ENCODE measurements at regions of chr1 and their contacts with region 1.

Region 1: DNA sequence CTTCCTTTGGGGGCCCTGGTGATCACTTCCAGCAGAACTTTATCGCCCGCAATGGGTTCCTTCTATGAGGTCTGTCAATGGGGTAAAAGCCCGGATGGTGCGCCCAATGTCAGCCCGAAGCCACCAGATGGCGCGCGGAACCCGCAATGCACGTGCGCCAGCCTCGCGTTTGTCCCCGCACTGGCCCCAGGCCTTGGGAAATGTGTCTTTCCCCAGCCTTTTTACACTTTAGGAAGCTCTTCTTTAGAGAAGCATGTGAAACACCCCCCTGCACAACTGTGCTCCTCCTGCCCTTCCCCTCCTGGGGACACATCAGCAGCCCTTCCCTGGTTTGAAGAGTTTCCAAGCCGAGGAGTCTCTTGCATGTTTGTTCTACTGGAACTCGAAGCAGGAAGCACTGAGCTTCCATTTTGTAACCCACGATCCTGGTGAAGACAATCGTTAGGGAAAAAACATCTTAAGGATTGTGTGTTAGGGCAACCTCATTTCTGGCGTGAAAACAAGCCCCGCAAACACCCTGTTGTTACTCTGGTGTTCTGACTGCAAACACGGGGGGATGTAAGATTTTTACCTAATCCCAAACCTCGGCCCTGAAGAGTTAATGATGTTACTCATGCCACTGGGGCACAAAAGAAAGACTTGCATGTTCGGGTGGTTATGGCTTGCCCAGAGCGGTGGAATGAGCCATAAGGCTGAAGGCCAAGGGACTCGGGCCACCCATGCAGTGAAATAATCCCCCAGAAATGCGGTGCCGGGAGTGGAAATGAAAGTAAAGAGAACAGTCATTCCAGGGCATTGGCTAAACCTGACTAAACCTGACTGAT is 20.4 kb upstream of the TARBP1 start:
- DNase-seq: peak; percentile 81
- H3K4me3 Mint-ChIP-seq: peak overlapping the region; percentile 11
- H3K27ac Mint-ChIP-seq: peak overlapping the region; percentile 93
- H3K4me1 Mint-ChIP-seq: peaks cover 80% of the 10 kb centered on the region
- H3K27me3 Mint-ChIP-seq: no peaks in the 10 kb centered on the region

Region 2: DNA sequence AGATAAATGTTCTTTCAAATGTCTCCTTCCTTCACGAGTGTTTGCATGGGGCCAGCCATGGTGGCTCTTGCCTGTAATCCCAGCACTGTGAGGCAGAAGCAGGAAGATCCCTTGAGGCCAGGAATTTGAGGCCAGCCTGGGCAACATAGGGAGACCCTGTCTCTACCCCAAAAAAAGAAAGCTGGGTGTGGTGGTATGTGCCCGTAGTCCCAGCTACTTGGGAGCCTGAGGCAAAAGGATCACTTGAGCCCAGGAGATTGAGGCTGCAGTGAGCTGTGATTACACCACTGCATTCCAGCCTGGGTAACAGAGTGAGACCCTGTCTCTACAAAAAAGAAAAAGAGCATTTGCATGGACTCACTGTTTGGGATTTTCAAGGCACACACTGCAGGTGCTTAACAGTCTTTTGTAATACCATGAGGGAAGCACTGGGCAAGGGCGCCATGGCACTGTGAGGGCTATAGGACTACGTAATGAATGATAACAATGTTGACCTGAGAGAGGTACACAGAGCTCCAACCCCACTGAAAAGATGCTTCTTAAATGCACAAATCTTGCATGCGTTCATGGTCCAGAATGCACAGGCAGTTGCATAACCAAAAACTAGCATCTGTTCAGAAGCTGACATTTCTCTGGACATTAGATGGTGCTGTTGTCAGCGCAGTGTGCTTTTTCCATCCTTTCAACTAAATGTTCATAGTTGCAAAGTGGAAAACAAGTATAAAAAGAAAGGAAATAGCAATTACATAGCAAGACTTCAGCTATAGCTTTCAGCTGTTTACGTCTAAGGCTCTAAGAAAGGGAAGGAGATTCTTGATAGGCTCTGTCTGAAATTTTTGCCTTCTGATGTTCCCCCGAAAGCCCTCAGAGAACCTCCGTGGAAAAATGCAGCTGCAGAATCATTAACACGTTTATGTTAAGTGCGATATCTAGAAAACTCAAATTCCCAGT is 12.6 kb before region 1 on chr1:
- intact Hi-C with region 1: loop called (anchors 1 kb)
- DNase-seq: no peak
- H3K4me3 Mint-ChIP-seq: peak overlapping the region; percentile 28
- H3K27ac Mint-ChIP-seq: peak overlapping the region; percentile 94
- H3K4me1 Mint-ChIP-seq: peaks cover 42% of the 10 kb centered on the region
- H3K27me3 Mint-ChIP-seq: peaks cover 16% of the 10 kb centered on the region

Region 3: GRCh38 chr1:234599617-234600417 is 100.5 kb after region 1 on chr1:
- intact Hi-C with region 1: loop called (anchors 1 kb)
- DNase-seq: peak; percentile 70
- H3K4me3 Mint-ChIP-seq: peak overlapping the region; percentile 82
- H3K27ac Mint-ChIP-seq: peak overlapping the region; percentile 92
- H3K4me1 Mint-ChIP-seq: peaks cover 53% of the 10 kb centered on the region
- H3K27me3 Mint-ChIP-seq: no peaks in the 10 kb centered on the region

Region 4: GRCh38 chr1:234722904-234723720 is 223.8 kb after region 1 on chr1:
- intact Hi-C with region 1: loop called (anchors 2 kb)
- DNase-seq: peak; percentile 26
- H3K4me3 Mint-ChIP-seq: peak overlapping the region; percentile 72
- H3K27ac Mint-ChIP-seq: peak overlapping the region; percentile 99
- H3K4me1 Mint-ChIP-seq: peaks cover 73% of the 10 kb centered on the region
- H3K27me3 Mint-ChIP-seq: no peaks in the 10 kb centered on the region

Region 5: DNA sequence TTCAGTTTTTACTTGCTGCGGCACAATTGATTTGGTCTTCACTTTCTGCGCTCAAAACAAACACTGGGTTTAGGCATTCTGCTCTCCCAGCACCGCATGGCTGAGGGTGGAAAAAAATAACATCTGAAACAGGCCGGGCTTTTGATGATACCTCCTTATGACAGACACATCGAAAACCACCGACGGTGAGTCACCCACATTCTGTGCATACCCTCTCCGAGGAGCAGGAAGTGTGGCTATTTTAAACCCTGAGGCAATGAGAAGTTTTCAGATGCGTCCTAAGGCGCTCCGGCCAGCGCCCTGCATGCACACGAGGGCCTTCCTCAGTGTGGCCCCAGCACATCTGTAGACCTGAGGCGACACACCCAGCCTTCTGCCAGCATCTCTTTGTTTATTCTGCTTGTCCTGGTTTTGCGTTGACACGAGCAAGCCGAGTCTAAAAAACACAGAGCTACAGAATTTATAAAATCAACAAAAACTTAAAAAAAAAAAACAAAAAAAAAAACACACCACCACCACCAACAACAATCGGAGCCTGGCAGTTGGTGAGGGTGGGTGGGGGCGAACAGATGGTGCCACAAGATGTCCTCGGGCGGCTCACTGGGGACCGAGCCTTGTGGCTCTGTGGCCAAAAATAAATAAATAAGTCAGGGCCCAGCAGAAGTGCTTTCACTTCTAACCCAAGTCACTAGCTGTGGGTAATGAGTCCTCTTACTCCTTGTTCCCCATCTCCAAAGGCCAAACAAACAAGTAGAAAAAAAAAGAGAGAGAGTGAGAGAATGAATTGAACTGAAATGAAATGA is 273.2 kb after region 1 on chr1:
- intact Hi-C with region 1: loop called (anchors 1 kb)
- DNase-seq: peak; percentile 86
- H3K4me3 Mint-ChIP-seq: peak overlapping the region; percentile 71
- H3K27ac Mint-ChIP-seq: peak overlapping the region; percentile 97
- H3K4me1 Mint-ChIP-seq: peaks cover 58% of the 10 kb centered on the region
- H3K27me3 Mint-ChIP-seq: no peaks in the 10 kb centered on the region

Region 6: DNA sequence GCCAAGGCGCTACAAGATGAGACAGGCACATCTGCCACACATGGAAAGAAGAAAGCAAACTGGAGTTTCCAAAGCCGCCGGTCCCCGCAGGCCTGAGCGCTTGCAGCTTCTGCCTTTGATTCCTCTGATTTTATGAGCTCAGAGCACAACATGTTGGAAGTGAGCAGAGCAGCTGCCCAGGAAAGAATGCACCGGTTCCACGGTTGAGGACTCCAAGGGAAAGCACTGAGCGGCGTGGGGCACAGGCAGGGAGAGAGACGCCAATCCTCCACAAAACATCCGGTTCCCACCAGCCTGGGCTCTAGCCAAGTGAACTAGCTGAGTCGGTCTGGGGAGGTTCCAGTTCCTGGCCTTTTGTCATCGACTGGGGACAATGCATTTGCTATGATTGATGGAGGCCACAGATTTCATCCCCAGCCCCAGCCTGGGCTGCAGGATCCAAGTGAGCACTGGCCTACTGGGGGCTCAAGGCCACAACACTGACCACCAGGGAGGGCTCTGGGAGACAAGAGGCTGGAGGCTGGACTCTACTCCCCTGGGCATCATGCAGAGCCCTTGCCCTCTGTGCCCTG is 363.7 kb after region 1 on chr1:
- intact Hi-C with region 1: loop called (anchors 5 kb)
- DNase-seq: no peak
- H3K4me3 Mint-ChIP-seq: no peak overlapping the region
- H3K27ac Mint-ChIP-seq: no peak overlapping the region
- H3K4me1 Mint-ChIP-seq: peaks cover 30% of the 10 kb centered on the region
- H3K27me3 Mint-ChIP-seq: no peaks in the 10 kb centered on the region